ENCODE measurements at regions of chr12 and their contacts with region 1.

Region 1: GRCh38 chr12:6195665-6196535 is 4.3 kb upstream of the CD9 start:
- DNase-seq: peak; percentile 97
- H3K4me3 ChIP-seq: no peak overlapping the region
- H3K27ac ChIP-seq: peak overlapping the region; percentile 61
- H3K4me1 ChIP-seq: peaks cover 17% of the 10 kb centered on the region
- H3K27me3 ChIP-seq: no peaks in the 10 kb centered on the region
- CTCF ChIP-seq: peak; percentile 91 to 96
- POLR2A ChIP-seq: peak; percentile 25

Region 2: DNA sequence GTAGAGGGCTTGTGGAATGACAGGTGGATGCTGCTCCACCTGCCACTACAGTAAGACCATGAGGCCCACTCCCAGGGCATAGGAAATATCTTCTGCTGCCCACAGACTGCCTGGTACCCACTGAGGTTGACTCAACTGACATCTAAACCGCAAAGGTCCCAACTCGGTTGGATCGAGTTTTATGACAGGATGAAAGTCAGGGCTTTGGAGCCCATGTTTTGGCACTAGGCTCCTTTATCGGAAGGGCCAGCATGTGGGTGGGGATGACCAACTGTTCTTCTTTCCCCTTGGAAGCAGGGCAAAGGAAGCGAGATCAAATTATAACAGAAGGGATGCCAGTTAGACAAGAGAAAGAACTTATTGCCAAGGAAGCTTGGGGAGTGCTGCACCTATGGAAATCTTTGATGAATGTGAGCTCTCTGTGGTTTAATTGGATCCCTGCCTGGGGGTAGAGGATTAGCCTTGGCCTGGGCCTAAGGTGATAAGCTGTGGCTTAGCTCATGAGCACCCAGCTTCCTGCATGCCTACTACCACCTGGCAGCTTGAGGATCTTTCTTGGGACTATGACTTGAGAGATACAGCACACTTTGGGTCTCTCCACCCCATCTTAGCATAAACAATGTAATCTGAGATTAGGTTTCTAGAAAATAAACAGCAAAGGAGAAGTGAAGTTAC is 1030.5 kb before region 1 on chr12:
- CTCF ChIA-PET with region 1: no interaction called
- POLR2A ChIA-PET with region 1: no interaction called
- dilution Hi-C with region 1: no loop called
- intact Hi-C with region 1: no loop called
- DNase-seq: no peak
- H3K4me3 ChIP-seq: no peak overlapping the region
- H3K27ac ChIP-seq: no peak overlapping the region
- H3K4me1 ChIP-seq: no peaks in the 10 kb centered on the region
- H3K27me3 ChIP-seq: no peaks in the 10 kb centered on the region
- CTCF ChIP-seq: no peak
- POLR2A ChIP-seq: no peak

Region 3: GRCh38 chr12:6062757-6063735 is 132.9 kb before region 1 on chr12:
- CTCF ChIA-PET with region 1: interaction called, 16 read pairs
- POLR2A ChIA-PET with region 1: no interaction called
- dilution Hi-C with region 1: no loop called
- intact Hi-C with region 1: no loop called
- DNase-seq: no peak
- H3K4me3 ChIP-seq: no peak overlapping the region
- H3K27ac ChIP-seq: no peak overlapping the region
- H3K4me1 ChIP-seq: peaks cover 14% of the 10 kb centered on the region
- H3K27me3 ChIP-seq: no peaks in the 10 kb centered on the region
- CTCF ChIP-seq: peak; percentile 61 to 83
- POLR2A ChIP-seq: peak; percentile 42

Region 4: DNA sequence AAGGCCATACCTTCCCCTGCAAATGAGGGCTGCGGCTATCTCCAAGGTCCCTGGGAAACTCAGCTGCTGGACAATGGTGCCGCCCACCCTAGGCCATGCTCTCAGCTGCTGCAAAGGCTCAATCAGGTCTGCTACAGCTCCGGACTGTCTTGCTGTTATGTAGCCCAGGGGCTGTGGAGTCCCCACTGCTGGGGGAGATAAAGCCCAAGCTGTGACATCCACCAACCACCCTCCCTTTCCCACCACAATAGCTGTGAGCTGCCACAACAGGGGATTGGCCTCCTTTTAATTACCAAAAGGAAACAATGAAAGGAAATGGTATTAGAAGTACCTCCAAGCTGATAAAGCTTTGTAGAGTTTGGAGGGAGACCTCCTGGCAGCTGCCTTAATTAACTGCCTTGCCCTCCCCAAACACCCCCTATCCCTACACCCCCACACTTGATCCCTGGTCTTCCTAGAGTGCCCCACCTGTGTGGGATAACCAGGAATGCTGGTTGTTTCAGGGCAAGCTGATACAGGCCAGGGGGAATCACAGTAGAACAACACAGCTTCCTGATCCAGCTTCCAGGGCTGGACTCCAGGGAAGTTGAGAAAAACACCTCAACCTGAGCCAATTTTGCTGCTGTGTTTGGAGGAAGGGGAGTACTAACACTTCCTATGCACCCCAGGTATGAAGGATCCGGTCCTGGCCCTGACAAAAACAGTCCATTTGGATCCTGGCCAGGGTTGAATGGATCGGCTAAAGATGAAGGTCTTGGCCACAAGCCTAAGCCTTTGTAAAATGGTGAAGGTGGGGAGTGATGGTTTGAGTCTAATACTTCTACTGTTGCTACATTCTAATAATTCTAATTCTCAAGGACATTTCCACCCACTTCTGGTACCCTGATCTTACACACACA is 71.2 kb before region 1 on chr12 and contains the start of gene VWF:
- CTCF ChIA-PET with region 1: interaction called, 16 read pairs
- POLR2A ChIA-PET with region 1: no interaction called
- dilution Hi-C with region 1: no loop called
- intact Hi-C with region 1: no loop called
- DNase-seq: peak; percentile 90
- H3K4me3 ChIP-seq: peak within 1 kb of the TSS; percentile 17 to 93 (median 79)
- H3K27ac ChIP-seq: peak within 1 kb of the TSS; percentile 100
- H3K4me1 ChIP-seq: peaks cover 45% of the 10 kb centered on the region
- H3K27me3 ChIP-seq: no peaks in the 10 kb centered on the region
- CTCF ChIP-seq: no peak
- POLR2A ChIP-seq: peak; percentile 96
- total RNA-seq, gene VWF: 1,882 and 2,328 TPM in 2 replicates

Region 5: GRCh38 chr12:6215932-6216494 is 20.1 kb after region 1 on chr12:
- CTCF ChIA-PET with region 1: interaction called, 40 read pairs
- POLR2A ChIA-PET with region 1: no interaction called
- dilution Hi-C with region 1: no loop called
- intact Hi-C with region 1: no loop called
- DNase-seq: peak; percentile 92
- H3K4me3 ChIP-seq: no peak overlapping the region
- H3K27ac ChIP-seq: peak overlapping the region; percentile 68
- H3K4me1 ChIP-seq: peaks cover 69% of the 10 kb centered on the region
- H3K27me3 ChIP-seq: no peaks in the 10 kb centered on the region
- CTCF ChIP-seq: no peak
- POLR2A ChIP-seq: no peak

Region 6: GRCh38 chr12:6241495-6241894 is 45.6 kb after region 1 on chr12:
- CTCF ChIA-PET with region 1: interaction called, 16 read pairs
- POLR2A ChIA-PET with region 1: no interaction called
- dilution Hi-C with region 1: no loop called
- intact Hi-C with region 1: no loop called
- DNase-seq: peak; percentile 74
- H3K4me3 ChIP-seq: no peak overlapping the region
- H3K27ac ChIP-seq: no peak overlapping the region
- H3K4me1 ChIP-seq: peaks cover 9% of the 10 kb centered on the region
- H3K27me3 ChIP-seq: no peaks in the 10 kb centered on the region
- CTCF ChIP-seq: no peak
- POLR2A ChIP-seq: no peak

Region 7: DNA sequence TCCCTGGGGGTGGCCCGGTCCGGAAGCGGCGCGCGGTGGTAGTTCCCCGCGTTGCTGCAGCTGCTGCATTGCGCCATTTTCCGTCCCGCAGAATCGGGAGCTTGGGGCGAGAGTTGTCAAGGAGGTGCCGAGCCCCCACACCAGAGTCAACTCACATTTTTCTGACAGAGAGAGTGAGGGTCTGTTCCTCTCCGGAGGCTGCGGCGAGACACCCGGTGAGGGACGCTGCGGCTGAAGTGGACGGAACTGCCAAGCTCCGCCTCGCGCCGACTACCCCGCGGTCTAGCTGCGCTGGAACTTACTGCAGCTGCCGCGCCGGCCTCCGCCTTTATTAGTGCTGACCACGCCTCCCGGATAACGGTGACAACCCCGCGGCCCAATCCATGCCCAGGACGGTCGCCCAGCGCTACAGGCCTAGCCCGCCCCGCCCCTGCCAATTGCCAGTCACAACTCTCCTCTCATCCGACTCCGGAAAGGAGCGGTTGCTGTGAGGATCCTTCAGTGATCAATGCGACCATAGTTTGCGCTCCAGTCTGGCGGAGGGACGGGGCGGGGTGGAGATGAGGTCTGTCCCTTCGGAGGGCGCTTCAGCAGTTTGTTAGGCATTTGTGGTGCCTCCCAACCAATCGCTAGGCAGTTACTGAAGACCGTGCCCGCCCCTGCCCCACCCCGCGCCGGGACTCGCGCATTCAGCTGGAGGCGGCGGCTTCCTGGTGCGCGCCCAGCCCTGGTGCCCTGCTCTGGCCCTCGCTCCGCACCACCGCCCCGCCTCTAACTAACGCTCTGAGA is 274.7 kb after region 1 on chr12 and contains the start of gene VAMP1:
- CTCF ChIA-PET with region 1: interaction called, 10 read pairs
- POLR2A ChIA-PET with region 1: no interaction called
- dilution Hi-C with region 1: no loop called
- intact Hi-C with region 1: no loop called
- DNase-seq: peak; percentile 97
- H3K4me3 ChIP-seq: peak within 1 kb of the TSS; percentile 67 to 84 (median 71)
- H3K27ac ChIP-seq: peak within 1 kb of the TSS; percentile 49
- H3K4me1 ChIP-seq: peaks cover 16% of the 10 kb centered on the region
- H3K27me3 ChIP-seq: peaks cover 0 to 5% of the 10 kb centered on the region in 2 experiments
- CTCF ChIP-seq: no peak
- POLR2A ChIP-seq: peak; percentile 99
- total RNA-seq, gene VAMP1: 6.6 and 7.0 TPM in 2 replicates